Activated CD8-positive, alpha-beta T cell treated with anti-CD3 and anti-CD28 coated beads, Interleukin-2, amount 10 ng/mL, durations not matched to agents 7 days and 5 days (primary cell): ENCODE measurements at regions of chr16 and their contacts with region 1.

Region 1: DNA sequence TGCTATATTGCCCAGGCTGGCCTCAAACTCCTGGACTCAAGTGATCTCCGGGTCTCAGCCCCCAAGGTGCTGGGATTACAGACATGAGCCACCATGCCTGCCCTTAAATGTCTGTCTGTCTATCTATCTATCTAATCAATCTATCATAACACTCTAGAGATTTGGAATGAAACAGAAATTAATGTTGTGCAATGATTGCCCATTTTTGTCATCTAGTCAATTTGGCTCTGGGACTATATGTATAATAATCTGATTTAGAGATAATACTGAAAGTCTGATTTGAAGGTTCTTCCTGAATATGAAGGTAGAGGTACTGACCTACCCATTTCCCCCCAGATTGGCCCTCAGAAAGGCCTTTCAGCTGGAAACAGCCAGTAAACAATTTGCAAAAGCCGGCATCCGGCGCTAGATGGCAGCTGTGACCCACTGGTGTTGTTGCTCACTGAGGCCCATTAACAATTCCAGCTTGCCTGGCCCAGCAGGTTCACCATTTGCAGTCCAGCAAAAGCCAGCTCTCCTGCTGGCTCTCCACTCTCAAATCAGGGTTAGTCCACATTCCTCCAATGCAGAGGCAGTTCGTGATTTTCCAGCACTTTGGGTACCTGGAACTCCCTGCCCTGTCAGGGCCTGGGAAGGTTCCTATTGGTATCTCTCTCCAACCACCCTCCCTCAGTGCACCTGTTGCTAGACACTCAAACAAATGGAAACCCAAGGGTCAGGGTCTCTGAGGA is 22.9 kb upstream of the C16orf87 start:
- DNase-seq: peak; percentile 72
- ATAC-seq: peak; percentile 73
- H3K4me3 Mint-ChIP-seq: no peak overlapping the region
- H3K27ac Mint-ChIP-seq: no peak overlapping the region
- H3K4me1 Mint-ChIP-seq: no peaks in the 10 kb centered on the region
- H3K27me3 Mint-ChIP-seq: peaks cover 1% of the 10 kb centered on the region

Region 2: GRCh38 chr16:46673320-46674013 is 180.4 kb before region 1 on chr16:
- CTCF ChIA-PET with region 1: interaction called, 11 read pairs
- POLR2A ChIA-PET with region 1: no interaction called
- DNase-seq: peak; percentile 64
- ATAC-seq: peak; percentile 96
- H3K4me3 Mint-ChIP-seq: no peak overlapping the region
- H3K27ac Mint-ChIP-seq: no peak overlapping the region
- H3K4me1 Mint-ChIP-seq: no peaks in the 10 kb centered on the region
- H3K27me3 Mint-ChIP-seq: no peaks in the 10 kb centered on the region

Region 3: GRCh38 chr16:46812781-46813540 is 40.9 kb before region 1 on chr16:
- CTCF ChIA-PET with region 1: no interaction called
- POLR2A ChIA-PET with region 1: no interaction called
- DNase-seq: no peak
- ATAC-seq: no peak
- H3K4me3 Mint-ChIP-seq: no peak overlapping the region
- H3K27ac Mint-ChIP-seq: no peak overlapping the region
- H3K4me1 Mint-ChIP-seq: peaks cover 17% of the 10 kb centered on the region
- H3K27me3 Mint-ChIP-seq: no peaks in the 10 kb centered on the region

Region 4: DNA sequence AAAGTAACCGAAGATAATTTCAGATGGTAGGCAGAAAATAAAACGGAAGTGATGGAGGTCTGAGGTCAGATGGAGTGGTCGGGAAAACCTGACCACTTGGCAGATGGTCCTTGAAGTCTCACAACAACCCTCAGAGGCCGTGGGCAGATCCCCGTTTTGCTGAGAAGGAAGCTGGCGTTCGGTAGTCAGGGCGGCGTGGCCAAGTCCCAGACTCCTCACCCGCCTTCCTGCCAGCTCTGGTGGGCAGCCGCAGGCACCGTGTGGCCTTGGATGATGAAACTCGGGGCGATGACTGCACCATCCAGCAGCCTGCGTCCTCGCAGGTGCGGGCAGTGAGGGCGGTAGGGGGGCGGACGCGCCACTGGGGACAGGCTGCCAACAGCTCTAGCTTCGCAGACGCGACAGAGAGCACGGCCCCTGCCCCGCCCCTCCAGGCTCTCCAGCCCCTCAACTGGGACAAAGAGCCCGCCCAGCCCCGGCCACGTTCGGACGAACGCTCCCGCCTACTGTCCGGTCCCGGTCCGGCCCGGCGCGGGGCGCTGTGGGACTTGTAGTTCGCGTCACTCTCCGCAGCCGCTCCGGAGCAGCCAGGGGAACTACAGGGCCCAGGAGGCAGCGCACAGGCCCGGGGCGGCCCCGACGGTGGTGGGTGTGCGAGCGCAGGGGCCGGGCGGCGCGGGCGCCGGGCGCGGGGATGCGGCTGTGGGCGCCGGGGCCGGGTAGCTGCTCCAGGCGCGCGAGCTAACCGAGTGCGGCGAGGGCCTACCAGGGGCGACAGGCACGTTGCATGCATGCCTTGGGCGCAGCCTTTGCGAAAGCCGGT is 30.0 kb after region 1 on chr16 and contains the start of gene GPT2:
- CTCF ChIA-PET with region 1: interaction called, 11 read pairs
- POLR2A ChIA-PET with region 1: interaction called, 3 read pairs
- DNase-seq: peak; percentile 85
- ATAC-seq: peak; percentile 99
- H3K4me3 Mint-ChIP-seq: peak within 1 kb of the TSS; percentile 78
- H3K27ac Mint-ChIP-seq: peak within 1 kb of the TSS; percentile 71
- H3K4me1 Mint-ChIP-seq: peaks cover 15% of the 10 kb centered on the region
- H3K27me3 Mint-ChIP-seq: peaks cover 29% of the 10 kb centered on the region
- total RNA-seq, gene GPT2: 5.4 to 7.3 TPM

Region 5: DNA sequence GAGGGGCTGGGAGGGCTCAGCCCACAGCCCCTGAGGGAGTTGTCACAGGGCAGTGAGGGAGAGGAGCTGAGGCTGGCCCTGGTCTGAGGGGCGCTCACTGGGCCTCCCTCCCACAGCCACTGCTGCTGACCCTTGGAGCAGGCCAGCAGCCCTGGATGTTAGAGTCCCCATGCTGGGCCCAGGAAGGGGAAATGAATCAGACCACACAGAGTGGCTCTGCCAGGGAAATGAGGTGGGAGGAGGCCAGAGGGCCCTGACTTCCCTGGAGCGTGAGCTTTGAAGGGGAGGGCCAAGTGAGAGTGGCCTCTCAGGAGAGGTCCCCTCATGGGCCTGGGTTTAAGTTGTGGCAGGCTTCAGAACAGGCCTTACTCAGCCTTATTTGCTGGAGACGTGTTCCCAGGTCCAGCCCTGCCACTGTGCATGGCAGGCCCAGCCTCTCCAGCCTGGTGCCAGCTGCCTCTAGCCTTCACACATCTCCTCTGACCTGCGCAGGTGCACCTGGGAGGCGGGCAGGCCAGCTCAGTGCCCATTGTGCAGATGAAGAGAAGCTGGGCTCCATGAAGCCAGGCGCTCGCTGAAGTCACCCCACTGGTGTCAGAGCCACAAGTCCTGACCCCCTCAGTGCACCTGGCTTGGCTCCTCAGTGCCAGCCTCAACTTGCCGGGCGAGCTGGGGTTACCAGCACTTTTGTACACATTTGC is 45.7 kb after region 1 on chr16:
- CTCF ChIA-PET with region 1: interaction called, 14 read pairs
- POLR2A ChIA-PET with region 1: no interaction called
- DNase-seq: no peak
- ATAC-seq: no peak
- H3K4me3 Mint-ChIP-seq: no peak overlapping the region
- H3K27ac Mint-ChIP-seq: no peak overlapping the region
- H3K4me1 Mint-ChIP-seq: peaks cover 6% of the 10 kb centered on the region
- H3K27me3 Mint-ChIP-seq: no peaks in the 10 kb centered on the region

Region 6: DNA sequence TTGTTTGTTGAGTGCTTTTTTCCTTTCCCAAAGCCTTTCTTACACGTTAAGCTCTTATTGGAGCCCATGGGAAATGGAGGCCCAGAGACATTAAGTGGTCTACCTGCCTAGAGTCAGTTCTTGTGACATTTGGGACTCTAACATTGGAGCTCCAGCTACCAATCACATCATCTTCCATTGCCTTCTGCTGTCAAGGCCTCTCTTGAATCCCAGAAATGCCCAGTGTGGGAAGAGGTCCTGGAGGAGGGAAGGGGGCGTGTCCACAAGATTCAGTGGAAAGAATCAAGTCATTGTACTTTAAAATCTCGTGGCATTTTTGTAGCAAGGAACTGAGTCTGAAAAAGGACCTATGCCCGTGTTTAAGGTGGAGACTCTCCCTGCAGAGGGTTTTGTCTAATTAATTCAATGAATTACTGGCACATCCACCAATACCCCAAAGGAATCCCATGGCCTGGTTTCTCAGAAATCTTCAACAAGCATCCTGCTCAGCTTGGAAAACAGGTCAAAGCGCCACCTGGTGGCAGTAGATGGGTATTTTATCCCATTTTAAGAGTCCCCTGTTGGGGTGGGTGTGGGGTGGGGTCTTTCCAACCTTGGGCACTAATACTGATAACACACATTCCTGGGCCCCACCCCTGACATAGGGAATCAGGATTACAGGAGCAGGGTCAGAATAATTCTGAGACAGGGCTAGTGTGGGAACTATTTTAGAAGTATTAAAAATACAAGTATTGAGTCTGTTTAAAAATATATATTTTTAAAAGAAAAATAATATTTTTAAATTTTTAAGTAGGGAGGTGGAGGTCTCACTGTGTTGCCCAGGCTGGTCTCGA is 54.9 kb after region 1 on chr16:
- CTCF ChIA-PET with region 1: interaction called, 118 read pairs
- POLR2A ChIA-PET with region 1: no interaction called
- DNase-seq: peak; percentile 68
- ATAC-seq: peak; percentile 49
- H3K4me3 Mint-ChIP-seq: no peak overlapping the region
- H3K27ac Mint-ChIP-seq: no peak overlapping the region
- H3K4me1 Mint-ChIP-seq: peaks cover 13% of the 10 kb centered on the region
- H3K27me3 Mint-ChIP-seq: no peaks in the 10 kb centered on the region

Region 7: DNA sequence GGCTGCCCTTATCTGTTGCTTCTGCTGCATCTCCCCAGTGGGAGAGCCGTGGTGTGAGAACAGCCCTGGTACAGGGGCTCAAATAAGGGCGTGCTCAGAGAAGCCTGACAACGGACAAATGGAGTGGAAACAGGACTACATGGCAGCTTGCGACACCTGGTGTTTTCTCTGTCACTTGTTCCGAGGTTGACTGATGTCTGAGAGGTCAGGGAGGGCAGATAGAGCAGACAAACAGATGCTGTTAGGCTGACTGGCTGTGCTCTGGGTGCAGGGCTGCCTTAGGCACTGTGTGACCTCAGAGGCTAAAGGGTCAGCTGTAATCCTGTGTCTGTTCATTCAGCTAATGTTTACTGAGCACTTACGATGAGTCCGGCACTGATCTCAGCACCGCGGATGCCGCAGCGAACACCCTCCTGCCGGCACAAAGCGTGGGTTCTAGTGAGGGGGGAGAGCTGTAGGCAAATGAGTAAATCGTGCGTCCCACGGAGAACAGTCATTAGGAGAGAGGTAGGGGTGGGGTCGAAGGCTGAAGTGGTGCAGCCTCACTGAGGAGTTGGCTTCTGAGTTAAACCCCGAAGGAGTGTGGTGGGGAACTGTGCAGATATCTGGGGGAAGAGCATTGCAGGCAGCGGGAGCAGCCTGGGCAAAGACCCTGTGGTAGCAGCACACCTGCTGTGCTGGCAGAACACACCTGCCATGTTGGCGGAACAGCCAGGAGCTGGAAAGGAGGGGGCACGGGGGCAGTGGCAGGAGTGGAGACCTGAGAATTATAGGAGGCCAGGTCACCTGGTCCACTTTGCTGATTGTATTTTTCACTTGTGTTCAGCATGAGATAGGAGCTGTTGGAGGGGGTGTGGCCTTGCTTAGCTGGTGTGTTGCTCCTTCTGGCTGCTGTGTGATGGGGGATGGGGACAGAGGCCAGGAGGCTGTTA is 65.2 kb after region 1 on chr16:
- CTCF ChIA-PET with region 1: interaction called, 118 read pairs
- POLR2A ChIA-PET with region 1: no interaction called
- DNase-seq: no peak
- ATAC-seq: no peak
- H3K4me3 Mint-ChIP-seq: no peak overlapping the region
- H3K27ac Mint-ChIP-seq: no peak overlapping the region
- H3K4me1 Mint-ChIP-seq: no peaks in the 10 kb centered on the region
- H3K27me3 Mint-ChIP-seq: no peaks in the 10 kb centered on the region

Region 8: DNA sequence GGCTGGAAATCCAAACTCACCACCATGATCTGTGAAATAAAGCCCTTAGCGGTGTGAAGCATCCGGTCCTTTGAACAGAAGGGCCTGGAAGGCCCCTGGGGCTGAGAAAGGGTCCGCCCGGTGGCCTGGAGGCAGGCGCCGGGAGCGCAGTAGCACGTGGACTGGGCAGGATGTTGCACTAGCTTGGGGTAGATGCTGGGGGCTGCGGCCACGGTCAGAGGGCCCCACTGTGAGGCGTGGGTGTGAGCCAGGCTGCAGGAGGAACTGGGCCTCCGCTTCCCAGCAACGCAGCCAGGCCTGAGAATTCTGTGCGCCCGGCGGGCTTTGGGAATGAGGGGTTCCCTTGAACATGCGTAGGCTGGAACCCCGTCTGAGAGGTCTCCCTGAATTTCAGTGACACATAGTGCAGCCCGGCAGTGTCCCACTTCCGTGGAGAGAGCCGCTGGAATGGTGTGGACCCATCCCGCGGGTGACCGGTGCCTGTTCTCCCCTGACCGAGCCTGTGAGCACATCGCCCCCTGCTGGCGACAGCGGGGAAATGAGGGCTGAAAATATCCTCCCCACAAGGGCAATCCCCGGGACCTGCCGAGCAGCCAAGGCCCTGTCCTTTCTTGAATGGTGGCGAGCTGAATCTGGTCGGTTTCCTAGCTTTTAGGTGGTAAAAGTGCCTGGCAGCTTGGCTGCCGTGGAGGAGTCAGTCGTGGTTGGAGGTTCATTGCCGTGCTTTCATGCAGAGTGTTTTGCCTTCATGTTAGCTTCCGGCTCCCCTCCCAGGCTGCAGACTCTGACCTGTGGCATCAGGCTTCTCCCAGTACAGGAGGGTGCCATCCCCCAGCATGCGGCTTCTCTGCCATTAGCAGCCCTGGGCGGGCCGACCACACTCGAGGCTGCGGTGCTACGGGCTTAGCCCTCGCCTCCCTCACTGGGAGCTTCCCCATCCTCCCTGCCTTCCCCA is 75.8 kb after region 1 on chr16:
- CTCF ChIA-PET with region 1: interaction called, 37 read pairs
- POLR2A ChIA-PET with region 1: interaction called, 3 read pairs
- DNase-seq: peak; percentile 72
- ATAC-seq: peak; percentile 78
- H3K4me3 Mint-ChIP-seq: no peak overlapping the region
- H3K27ac Mint-ChIP-seq: no peak overlapping the region
- H3K4me1 Mint-ChIP-seq: peaks cover 5% of the 10 kb centered on the region
- H3K27me3 Mint-ChIP-seq: no peaks in the 10 kb centered on the region